CD4-positive, alpha-beta T cell (primary cell): ENCODE measurements at regions of chr1 and their contacts with region 1.

Region 1: DNA sequence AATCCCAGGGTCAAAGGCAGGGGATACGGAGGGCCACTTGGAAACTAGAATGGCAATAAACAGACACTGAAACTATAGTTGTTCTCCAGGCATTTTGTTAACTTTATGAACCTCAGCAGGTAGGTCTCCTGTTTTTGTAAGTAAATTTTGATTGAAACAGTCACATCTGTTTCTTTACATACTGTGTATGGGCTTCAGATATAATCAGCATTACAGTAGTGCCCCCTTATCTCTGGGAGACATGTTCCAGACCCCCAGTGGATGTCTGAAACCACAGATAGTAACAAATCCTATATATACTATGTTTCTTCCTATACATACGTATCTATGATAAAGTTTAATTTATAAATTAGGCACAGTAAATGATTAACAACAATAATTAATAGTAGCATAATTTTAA is 11.5 kb downstream of the STIL start:
- DNase-seq: no peak
- ATAC-seq: no peak
- H3K4me3 ChIP-seq: no peak overlapping the region
- H3K4me3 Mint-ChIP-seq: no peak overlapping the region
- H3K27ac ChIP-seq: no peak overlapping the region
- H3K27ac Mint-ChIP-seq: no peak overlapping the region
- H3K4me1 ChIP-seq: no peaks in the 10 kb centered on the region
- H3K4me1 Mint-ChIP-seq: no peaks in the 10 kb centered on the region
- H3K27me3 ChIP-seq: no peaks in the 10 kb centered on the region
- H3K27me3 Mint-ChIP-seq: no peaks in the 10 kb centered on the region
- CTCF ChIP-seq: no peak

Region 2: DNA sequence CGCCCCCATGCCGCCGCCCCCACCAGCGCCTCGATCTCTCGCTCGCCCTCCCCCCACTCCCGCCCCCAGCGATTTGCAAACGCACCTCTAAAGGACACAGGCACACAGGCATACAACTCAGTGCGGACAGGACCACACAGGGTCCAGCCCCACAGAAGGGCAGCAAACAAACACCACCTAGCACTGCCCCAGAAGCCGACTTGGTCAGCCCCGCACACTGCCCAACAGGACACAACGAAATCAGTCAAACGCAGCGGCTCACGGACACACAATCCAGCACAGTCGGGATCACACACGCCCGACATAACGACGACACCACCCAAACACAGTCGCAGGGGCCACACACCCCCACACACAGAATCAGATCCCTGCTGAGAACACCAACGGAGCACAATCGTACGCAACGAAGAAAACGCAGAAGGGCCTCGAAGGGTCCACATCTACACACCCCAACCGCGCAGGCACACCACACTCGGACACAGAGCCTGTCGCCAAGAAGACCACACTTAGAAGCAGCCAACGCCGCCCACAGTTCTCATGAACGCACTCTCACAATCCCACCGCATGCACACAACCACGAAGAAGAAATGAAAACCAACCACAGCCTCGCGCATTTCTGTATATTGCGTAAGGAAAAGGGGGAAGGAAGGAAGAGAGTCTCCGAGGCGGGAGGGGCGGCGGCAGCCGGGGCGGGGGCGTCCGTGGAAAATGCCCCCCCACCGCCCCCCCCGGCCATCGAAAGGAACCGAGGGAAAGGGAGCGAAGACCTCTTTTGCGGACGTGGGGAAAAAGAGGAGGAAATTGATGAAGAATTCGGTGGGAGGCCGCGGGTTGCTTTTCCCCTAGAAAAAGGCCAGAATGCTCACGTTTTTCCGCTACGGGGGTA is 70.9 kb before region 1 on chr1:
- CTCF ChIA-PET with region 1: no interaction called
- POLR2A ChIA-PET with region 1: no interaction called
- intact Hi-C with region 1: no loop called
- DNase-seq: peak in 4 of 14 experiments; percentile 15 to 57 (median 40)
- ATAC-seq: peak; percentile 24
- H3K4me3 ChIP-seq: peak overlapping the region; percentile 37
- H3K4me3 Mint-ChIP-seq: peak overlapping the region; percentile 81
- H3K27ac ChIP-seq: no peak overlapping the region
- H3K27ac Mint-ChIP-seq: no peak overlapping the region
- H3K4me1 ChIP-seq: peaks cover 37% of the 10 kb centered on the region
- H3K4me1 Mint-ChIP-seq: peaks cover 41% of the 10 kb centered on the region
- H3K27me3 ChIP-seq: peaks cover 71 to 87% of the 10 kb centered on the region in 2 experiments
- H3K27me3 Mint-ChIP-seq: peaks cover 91% of the 10 kb centered on the region
- CTCF ChIP-seq: no peak

Region 3: DNA sequence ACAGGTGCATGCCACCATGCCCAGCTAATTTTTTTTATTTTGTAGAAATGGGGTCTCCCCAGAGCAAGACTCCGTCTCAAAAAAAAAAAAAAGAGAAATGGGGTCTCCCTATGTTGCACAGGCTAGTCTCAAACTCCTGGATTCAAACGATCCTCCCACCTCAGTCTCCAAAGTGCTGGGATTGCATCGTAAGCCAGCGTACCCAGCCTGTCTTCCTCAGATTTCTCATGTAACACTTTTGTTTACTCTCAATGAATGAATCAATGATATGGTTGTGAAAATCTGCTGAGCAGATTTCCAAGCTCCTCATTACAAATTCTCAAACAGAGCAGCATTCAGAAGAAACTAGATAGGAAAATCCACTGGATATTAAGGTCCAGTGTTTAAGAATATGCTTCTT is 37.8 kb after region 1 on chr1:
- CTCF ChIA-PET with region 1: no interaction called
- POLR2A ChIA-PET with region 1: no interaction called
- intact Hi-C with region 1: loop called in 1 of 2 experiments (anchors 5 kb)
- DNase-seq: no peak
- ATAC-seq: no peak
- H3K4me3 ChIP-seq: no peak overlapping the region
- H3K4me3 Mint-ChIP-seq: no peak overlapping the region
- H3K27ac ChIP-seq: no peak overlapping the region
- H3K27ac Mint-ChIP-seq: no peak overlapping the region
- H3K4me1 ChIP-seq: peaks cover 11% of the 10 kb centered on the region
- H3K4me1 Mint-ChIP-seq: peaks cover 23% of the 10 kb centered on the region
- H3K27me3 ChIP-seq: no peaks in the 10 kb centered on the region
- H3K27me3 Mint-ChIP-seq: no peaks in the 10 kb centered on the region
- CTCF ChIP-seq: no peak

Region 4: DNA sequence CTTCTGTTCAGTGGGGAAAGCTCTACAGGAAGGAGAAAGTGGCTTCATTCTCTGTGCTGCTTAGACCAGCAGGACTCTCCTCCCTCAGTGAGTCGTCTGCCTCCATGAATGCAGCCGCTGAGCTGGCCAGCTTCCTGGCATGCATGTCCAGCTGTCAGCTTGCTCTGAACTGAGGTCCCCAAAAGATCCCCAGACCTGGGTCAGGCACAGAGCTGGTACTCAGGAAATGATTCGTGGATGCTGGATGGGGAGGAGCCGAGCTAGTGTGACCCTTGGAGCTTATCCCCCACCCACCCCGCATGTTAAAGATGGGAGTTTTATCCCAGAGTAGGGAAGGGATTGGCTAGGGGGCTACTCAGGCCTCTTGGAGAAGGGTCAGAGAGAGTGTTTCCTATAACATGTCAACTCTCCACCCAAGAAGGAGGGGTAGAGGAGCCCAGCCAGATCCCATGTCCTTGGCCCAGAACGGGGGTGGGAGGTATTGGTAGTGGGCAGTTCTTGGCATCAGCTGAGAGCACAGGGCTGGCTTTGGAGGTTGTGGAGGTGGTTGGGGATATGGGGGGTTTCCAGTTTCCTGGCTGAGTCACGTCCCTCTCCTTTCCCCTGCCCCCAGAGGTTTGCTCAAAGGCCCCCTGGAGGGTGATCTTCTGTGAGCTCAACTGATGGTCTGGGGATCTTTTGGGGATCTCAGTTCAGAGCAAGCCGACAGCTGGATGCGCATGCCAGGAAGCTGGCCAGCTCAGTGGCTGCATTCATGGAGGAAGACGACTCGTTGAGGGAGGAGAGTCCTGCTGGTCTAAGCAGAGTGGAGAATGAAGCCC is 245.5 kb after region 1 on chr1:
- CTCF ChIA-PET with region 1: no interaction called
- POLR2A ChIA-PET with region 1: no interaction called
- intact Hi-C with region 1: no loop called
- DNase-seq: no peak
- ATAC-seq: no peak
- H3K4me3 ChIP-seq: no peak overlapping the region
- H3K4me3 Mint-ChIP-seq: no peak overlapping the region
- H3K27ac ChIP-seq: no peak overlapping the region
- H3K27ac Mint-ChIP-seq: no peak overlapping the region
- H3K4me1 ChIP-seq: no peaks in the 10 kb centered on the region
- H3K4me1 Mint-ChIP-seq: no peaks in the 10 kb centered on the region
- H3K27me3 ChIP-seq: peaks cover 0 to 2% of the 10 kb centered on the region in 2 experiments
- H3K27me3 Mint-ChIP-seq: peaks cover 25% of the 10 kb centered on the region
- CTCF ChIP-seq: no peak